Body of pancreas (tissue), 4 donors: ENCODE measurements at regions of chr22 and their contacts with region 1.

Region 1: DNA sequence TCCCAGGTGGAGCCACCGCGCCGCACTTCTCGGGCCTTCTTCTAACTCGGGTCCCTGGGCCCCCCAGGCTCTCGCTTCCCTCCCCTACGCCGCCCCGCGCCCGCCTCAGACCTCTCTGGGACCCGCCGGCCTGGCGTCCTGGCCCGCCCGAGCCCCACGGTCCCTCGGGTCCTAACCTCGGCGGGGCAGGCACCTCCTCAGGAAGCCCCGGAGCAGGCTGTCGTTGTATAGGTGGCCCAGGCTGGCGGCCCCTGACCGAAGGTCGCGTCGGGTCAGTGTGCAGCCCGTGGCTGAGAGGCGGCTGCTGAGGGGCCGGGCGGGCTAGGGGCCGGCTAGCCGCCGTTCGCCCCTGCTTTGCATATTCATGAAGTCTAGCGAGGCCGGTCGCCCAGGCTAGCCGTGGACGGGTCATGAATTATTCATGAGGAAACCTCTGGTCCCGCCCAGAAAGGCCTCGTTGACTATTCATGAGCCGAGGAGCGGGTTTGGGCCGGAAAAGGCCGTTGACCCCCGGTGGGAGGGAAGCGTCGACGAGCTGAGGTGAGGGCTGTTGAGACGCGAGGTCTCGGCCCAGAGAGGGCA is at the start of gene HORMAD2:
- DNase-seq: no peak
- ATAC-seq: no peak
- H3K4me3 ChIP-seq: no peak within 1 kb of the TSS
- H3K27ac ChIP-seq: no peak within 1 kb of the TSS
- H3K4me1 ChIP-seq: no peaks in the 10 kb centered on the region
- H3K27me3 ChIP-seq: no peaks in the 10 kb centered on the region
- CTCF ChIP-seq: no peak
- POLR2A ChIP-seq: no peak
- total RNA-seq, gene HORMAD2: not detected

Region 2: DNA sequence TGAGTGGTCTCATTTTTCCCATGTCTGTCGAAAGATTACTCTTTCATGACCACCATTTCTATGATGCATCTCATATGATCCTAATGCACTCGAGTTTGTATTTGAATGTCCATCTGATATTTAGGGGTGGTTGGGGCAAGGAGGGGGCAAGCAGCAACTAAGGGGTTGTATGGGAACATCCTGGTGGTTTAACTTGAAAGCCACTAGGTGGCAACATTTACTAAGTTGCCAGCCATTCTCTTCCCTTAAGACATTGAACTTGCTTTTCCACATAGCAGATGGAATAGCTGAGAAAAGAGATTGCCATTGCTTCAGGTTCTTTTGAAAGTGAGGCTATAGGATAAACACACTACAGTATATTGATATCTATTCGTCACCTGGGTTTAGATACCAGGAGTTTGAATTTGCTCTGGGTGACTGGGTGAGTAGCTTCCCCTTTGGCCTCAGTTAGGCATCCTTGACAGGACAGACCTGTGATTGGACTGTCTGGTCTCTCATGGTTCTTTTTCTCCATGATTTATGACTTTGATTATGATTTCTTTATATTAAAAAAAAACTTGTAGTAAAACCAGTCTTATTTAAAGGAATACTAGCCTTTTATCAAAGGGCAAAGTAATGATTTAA is 444.2 kb before region 1 on chr22:
- intact Hi-C with region 1: loop called (anchors 10 kb)
- DNase-seq: no peak
- ATAC-seq: no peak
- H3K4me3 ChIP-seq: no peak overlapping the region
- H3K27ac ChIP-seq: no peak overlapping the region
- H3K4me1 ChIP-seq: peaks cover 14% of the 10 kb centered on the region
- H3K27me3 ChIP-seq: no peaks in the 10 kb centered on the region
- CTCF ChIP-seq: peak; percentile 8 to 61 (median 53)
- POLR2A ChIP-seq: no peak

Region 3: DNA sequence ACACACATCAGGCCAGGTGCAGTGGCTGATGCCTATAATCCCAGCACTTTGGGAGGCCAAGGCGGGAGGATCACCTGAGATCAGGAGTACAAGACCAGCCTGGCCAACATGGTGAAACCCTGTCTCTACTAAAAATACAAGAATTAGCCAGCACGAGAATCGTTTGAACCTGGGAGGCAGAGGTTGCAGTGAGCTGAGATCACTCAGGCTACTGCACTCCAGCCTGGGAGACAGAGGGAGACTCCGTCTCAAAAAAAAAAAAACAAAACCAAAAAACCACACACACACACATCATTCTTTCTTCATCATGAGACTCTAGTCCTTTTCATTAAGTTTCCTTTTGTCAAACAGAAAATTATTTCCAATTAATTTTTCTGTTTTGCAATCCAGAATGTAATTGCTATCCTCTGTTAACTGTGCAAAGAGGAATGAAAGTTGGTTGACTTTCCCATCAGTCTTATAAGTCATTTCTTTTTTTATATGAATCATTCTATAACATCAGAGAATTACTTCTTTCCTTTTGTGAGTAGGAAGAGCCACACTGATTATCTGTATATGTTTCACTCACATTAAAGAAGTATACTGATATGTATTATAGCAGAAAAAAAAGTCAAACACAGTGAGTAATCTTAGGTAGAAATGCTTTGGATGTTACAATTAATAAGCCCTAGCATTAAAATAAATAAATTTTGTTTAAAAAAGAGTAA is 52.4 kb after region 1 on chr22:
- intact Hi-C with region 1: no loop called
- DNase-seq: no peak
- ATAC-seq: no peak
- H3K4me3 ChIP-seq: no peak overlapping the region
- H3K27ac ChIP-seq: no peak overlapping the region
- H3K4me1 ChIP-seq: no peaks in the 10 kb centered on the region
- H3K27me3 ChIP-seq: no peaks in the 10 kb centered on the region
- CTCF ChIP-seq: no peak
- POLR2A ChIP-seq: no peak